ENCODE measurements at regions of chr2 and their contacts with region 1.

Region 1: GRCh38 chr2:70871398-70872211 is 36.0 kb upstream of the CD207 start:
- DNase-seq: peak; percentile 55
- H3K4me3 ChIP-seq: peak overlapping the region in 1 of 3 experiments; percentile 24
- H3K27ac ChIP-seq: no peak overlapping the region
- H3K4me1 ChIP-seq: peaks cover 10% of the 10 kb centered on the region
- H3K27me3 ChIP-seq: no peaks in the 10 kb centered on the region
- CTCF ChIP-seq: peak; percentile 74 to 92

Region 2: DNA sequence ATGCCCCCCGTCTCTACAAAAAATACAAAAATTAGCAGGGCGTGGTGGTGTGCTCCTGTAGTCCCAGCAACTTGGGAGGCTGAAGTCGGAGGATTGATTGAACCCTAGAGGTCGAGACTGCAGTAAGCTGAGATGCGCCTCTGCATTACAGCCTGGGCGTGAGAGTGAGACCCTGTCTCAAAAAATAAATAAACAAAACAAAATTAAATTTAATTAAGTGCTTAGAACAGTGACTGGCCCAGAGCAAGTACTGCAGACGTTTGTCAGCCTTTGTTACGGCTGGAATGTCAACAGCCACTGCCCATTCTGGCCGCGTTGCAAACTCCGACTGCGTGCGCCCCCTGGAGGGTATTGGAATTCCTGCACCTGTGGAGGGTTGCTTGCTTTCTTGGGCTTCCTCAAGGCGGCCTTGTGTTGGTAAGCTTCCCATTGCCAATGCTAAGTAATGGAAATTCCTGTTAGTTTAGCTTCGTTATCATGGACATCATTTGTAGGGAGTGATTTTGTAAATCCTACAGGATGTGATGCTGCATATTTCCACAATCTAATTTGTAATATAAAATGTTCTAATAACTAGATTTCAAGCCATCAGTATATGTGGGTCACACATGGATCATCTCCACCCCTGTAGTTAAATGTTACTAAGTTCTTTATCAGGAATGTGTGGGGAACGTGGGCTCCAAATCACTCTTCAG is 48.2 kb after region 1 on chr2:
- CTCF ChIA-PET with region 1: interaction called, 4 read pairs
- dilution Hi-C with region 1: loop called (anchors 10 kb)
- in situ Hi-C with region 1: no loop called
- intact Hi-C with region 1: loop called (anchors 1 kb)
- DNase-seq: peak; percentile 60
- H3K4me3 ChIP-seq: no peak overlapping the region
- H3K27ac ChIP-seq: no peak overlapping the region
- H3K4me1 ChIP-seq: no peaks in the 10 kb centered on the region
- H3K27me3 ChIP-seq: no peaks in the 10 kb centered on the region
- CTCF ChIP-seq: peak; percentile 90 to 93

Region 3: GRCh38 chr2:70942396-70943204 is 71.0 kb after region 1 on chr2:
- CTCF ChIA-PET with region 1: interaction called, 7 read pairs
- dilution Hi-C with region 1: loop called (anchors 5 kb)
- in situ Hi-C with region 1: loop called in 1 of 2 experiments (anchors 5 kb)
- intact Hi-C with region 1: loop called (anchors 1 kb)
- DNase-seq: no peak
- H3K4me3 ChIP-seq: no peak overlapping the region
- H3K27ac ChIP-seq: no peak overlapping the region
- H3K4me1 ChIP-seq: no peaks in the 10 kb centered on the region
- H3K27me3 ChIP-seq: no peaks in the 10 kb centered on the region
- CTCF ChIP-seq: no peak

Region 4: DNA sequence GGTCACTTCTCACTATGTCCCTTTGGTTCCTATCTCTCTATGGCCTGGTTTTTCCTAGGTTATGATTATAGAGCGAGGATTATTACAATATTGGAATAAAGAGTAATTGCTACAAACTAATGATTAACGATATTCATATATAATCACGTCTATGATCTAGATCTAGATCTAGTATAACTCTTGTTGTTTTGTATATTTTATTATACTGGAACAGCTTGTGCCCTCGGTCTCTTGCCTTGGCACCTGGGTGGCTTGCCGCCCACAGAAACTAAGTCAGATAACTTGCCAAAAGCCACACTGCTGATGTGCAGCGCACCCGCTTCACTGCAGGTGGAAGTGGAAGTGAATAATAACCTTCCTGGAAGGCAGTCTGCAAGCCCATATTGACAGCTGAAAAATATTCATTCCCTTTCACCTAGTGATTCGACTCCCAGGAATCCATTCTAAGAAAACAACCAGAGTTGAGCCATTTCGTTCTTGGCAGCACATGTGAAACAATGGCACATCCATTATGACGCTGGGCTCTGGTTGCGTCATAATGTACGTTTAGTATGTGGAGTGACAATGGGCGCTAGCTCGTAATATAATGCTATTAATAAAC is 106.1 kb after region 1 on chr2:
- CTCF ChIA-PET with region 1: interaction called, 7 read pairs
- dilution Hi-C with region 1: no loop called
- in situ Hi-C with region 1: no loop called
- intact Hi-C with region 1: loop called (anchors 1 kb)
- DNase-seq: peak; percentile 83
- H3K4me3 ChIP-seq: peak overlapping the region in 2 of 3 experiments; percentile 47 to 49
- H3K27ac ChIP-seq: peak overlapping the region; percentile 32
- H3K4me1 ChIP-seq: peaks cover 18% of the 10 kb centered on the region
- H3K27me3 ChIP-seq: no peaks in the 10 kb centered on the region
- CTCF ChIP-seq: no peak